ENCODE measurements at regions of chr10 and their contacts with region 1.

Region 1: DNA sequence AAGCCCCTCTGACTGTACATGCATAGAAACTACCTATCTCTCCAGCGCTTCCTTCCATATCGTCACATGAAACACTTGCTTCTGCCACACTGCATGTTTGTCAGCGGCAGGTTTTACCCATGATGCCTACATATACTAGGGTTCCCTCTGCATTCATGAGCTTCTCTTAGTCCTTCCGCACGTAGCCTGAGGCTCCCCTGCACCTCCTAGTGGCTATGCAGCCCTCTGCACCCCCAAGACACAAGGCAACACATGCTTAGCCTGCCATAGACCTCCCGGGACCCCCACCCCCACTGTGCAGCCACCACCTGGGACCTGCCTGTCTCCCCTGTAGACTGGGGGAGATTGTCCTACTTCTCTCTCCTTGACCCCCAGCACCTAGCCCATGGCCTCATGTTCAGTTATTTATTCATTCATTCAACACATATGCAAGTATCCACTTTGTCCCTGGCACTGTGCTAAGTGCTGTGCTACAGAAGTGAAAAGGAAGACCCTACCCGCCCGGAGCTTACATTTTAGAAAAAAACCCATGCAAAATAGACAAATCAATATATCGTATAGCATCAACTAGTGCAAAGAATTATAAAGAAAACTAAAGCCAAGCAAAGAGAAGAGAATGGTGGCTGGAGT is 23.5 kb downstream of the TMEM273 start:
- DNase-seq: peak; percentile 92
- H3K4me3 ChIP-seq: no peak overlapping the region
- H3K27ac ChIP-seq: no peak overlapping the region
- H3K4me1 ChIP-seq: peaks cover 15% of the 10 kb centered on the region
- CTCF ChIP-seq: peak; percentile 98

Region 2: DNA sequence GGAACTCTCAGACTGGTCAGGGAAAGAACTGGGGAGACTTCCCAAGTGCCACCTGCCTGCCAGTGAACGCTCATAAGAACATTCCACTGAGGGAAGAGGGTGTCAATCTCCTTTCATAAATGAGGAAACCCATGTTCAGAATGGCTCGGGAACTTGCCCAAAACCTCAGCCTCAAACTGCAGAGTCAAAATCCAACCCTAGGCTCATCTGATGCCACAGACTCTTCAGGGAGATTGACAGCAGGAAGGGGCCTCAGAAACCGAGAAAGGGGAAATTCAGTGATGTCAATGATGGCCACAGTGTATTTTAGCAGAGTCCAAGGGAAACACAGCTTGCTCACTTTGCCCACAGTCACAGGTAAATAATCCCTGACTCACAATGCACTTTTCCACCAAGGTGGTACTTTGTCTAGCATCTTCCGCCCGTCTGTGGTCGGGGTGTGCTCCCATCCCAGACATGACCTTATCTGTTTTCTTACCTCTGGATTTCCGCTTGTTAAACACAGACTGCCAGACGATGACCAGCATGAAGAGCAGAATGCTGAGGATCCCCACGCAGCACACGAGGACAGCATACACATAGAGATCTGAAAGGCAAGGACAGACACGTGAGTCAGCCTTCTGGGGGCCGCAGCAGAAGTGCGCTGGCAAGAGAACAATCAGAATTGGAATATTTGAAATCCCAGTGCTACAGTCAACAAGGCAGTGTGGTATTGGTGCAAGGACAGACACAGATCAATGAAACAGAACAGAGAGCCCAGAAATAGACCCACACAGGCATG is 87.7 kb before region 1 on chr10:
- CTCF ChIA-PET with region 1: no interaction called
- POLR2A ChIA-PET with region 1: interaction called, 6 read pairs
- intact Hi-C with region 1: loop called (anchors 5 kb)
- DNase-seq: peak; percentile 54
- H3K4me3 ChIP-seq: no peak overlapping the region
- H3K27ac ChIP-seq: no peak overlapping the region
- H3K4me1 ChIP-seq: peaks cover 48% of the 10 kb centered on the region
- CTCF ChIP-seq: no peak

Region 3: GRCh38 chr10:49281461-49281860 is 116.8 kb after region 1 on chr10:
- CTCF ChIA-PET with region 1: no interaction called
- POLR2A ChIA-PET with region 1: no interaction called
- intact Hi-C with region 1: no loop called
- DNase-seq: no peak
- H3K4me3 ChIP-seq: no peak overlapping the region
- H3K27ac ChIP-seq: no peak overlapping the region
- H3K4me1 ChIP-seq: no peaks in the 10 kb centered on the region
- CTCF ChIP-seq: peak; percentile 75